Activated T-helper 1 cell treated with anti-CD3 and anti-CD28 coated beads, Interleukin-12 subunit alpha, Interleukin-12 subunit beta, Interleukin-2, Interleukin-4 antibody, amounts not matched to agents 30 ng/mL and 10 ng/mL and 1 ng/mL, durations not matched to agents 14 hours and 24 hours and 36 hours (primary cell): ENCODE measurements at regions of chr1 and their contacts with region 1.

Region 1: GRCh38 chr1:223123011-223123610 is 19.9 kb downstream of the TLR5 start:
- DNase-seq: no peak
- H3K4me3 Mint-ChIP-seq: peak overlapping the region; percentile 31
- H3K27ac Mint-ChIP-seq: no peak overlapping the region
- H3K4me1 Mint-ChIP-seq: peaks cover 8% of the 10 kb centered on the region
- H3K27me3 Mint-ChIP-seq: peaks cover 7% of the 10 kb centered on the region

Region 2: GRCh38 chr1:223081181-223081994 is 41.7 kb before region 1 on chr1:
- intact Hi-C with region 1: loop called (anchors 1 kb)
- DNase-seq: peak; percentile 45
- H3K4me3 Mint-ChIP-seq: peak overlapping the region; percentile 24
- H3K27ac Mint-ChIP-seq: peak overlapping the region; percentile 6
- H3K4me1 Mint-ChIP-seq: no peaks in the 10 kb centered on the region
- H3K27me3 Mint-ChIP-seq: peaks cover 4% of the 10 kb centered on the region

Region 3: GRCh38 chr1:223142795-223143536 is 19.9 kb after region 1 on chr1 and contains the start of gene TLR5:
- intact Hi-C with region 1: loop called (anchors 1 kb)
- DNase-seq: peak; percentile 82
- H3K4me3 Mint-ChIP-seq: peak within 1 kb of the TSS; percentile 68
- H3K27ac Mint-ChIP-seq: peak within 1 kb of the TSS; percentile 18
- H3K4me1 Mint-ChIP-seq: peaks cover 7% of the 10 kb centered on the region
- H3K27me3 Mint-ChIP-seq: peaks cover 11% of the 10 kb centered on the region
- total RNA-seq, gene TLR5: not detected in 2 replicates